WTC11 (cell line): ENCODE measurements at regions of chr11 and their contacts with region 1.

Region 1: DNA sequence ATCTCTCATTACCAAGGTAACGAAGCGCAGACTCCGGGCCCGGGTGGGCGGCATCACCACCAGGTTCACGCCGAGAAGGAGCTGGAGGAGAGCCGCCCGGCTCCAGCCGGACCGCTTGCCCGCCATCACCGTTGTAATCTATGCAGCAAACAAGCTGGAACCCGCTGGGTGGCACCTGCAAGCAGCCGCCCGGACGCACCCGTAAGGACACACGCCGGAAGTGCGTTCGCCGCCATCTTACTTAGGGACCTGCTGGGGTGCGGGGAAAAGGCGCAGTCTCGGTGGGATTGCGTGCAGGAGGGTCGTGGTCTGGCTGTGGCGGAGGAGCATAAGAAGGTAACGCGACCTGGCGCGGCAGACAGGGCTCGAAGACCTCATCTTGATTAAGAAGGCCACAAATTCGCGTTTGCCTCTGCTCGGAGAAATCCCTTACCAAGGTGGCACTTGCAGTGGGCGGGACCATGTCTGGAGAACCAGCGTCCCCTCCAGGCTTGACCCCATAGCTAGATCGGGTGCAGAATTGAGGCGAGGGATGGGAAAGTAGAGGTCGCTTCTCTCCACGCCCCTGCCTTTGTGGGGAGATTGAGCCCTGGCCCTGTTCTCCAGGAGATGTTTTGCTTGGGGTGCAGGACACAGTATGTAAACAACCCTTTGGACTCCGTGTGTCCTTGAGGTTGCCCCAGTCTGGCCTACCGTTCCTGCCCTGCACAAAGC is at the start of gene ACP2:
- DNase-seq: peak; percentile 91
- ATAC-seq: peak; percentile 93
- H3K4me3 Mint-ChIP-seq: peak within 1 kb of the TSS; percentile 98
- H3K27ac Mint-ChIP-seq: peak within 1 kb of the TSS; percentile 100
- H3K4me1 Mint-ChIP-seq: peaks cover 9% of the 10 kb centered on the region
- H3K27me3 Mint-ChIP-seq: no peaks in the 10 kb centered on the region
- CTCF ChIP-seq: no peak
- total RNA-seq, gene ACP2: 18.7 to 19.6 TPM (median 19.2 TPM) in 3 replicates

Region 2: GRCh38 chr11:47176328-47177228 is 72.2 kb before region 1 on chr11 and contains the start of gene ARFGAP2:
- CTCF ChIA-PET with region 1: interaction called, 23 read pairs
- POLR2A ChIA-PET with region 1: interaction called, 3 read pairs
- DNase-seq: peak; percentile 95
- ATAC-seq: peak; percentile 94
- H3K4me3 Mint-ChIP-seq: peak within 1 kb of the TSS; percentile 88
- H3K27ac Mint-ChIP-seq: peak within 1 kb of the TSS; percentile 98
- H3K4me1 Mint-ChIP-seq: peaks cover 16% of the 10 kb centered on the region
- H3K27me3 Mint-ChIP-seq: no peaks in the 10 kb centered on the region
- CTCF ChIP-seq: no peak
- total RNA-seq, gene ARFGAP2: 55.7 to 73.0 TPM (median 60.5 TPM) in 3 replicates

Region 3: DNA sequence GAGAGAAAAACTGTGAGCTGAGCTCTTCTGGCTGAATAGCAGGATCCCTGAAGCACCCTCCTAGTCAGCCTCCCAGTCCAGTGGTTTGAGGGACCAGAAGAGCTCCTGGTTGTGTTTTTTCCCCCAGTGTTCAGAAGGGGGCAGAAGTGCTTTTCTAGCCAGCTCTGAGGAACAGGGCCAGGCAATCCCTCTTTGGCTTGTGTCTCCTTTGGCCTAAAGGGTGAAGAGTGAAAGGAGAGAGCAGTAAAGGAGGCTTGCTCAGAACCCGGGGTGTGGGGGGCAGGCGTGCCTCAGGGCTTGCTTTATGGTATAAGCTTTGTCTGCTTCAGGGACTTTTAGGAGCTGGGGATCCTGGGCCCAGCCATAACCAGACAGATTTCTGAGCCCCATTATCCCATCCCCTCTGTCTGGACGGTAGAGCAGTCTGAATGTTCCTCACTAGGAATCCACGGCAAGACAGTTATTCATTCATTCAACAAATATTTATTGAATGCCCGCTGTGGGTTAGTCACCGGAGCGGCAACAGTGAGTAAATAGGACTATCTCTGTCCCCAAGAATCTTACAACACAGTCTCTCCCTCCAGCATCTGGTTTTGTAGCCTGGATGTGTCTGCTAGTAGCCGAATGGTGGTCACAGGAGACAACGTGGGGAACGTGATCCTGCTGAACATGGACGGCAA is 14.7 kb before region 1 on chr11:
- CTCF ChIA-PET with region 1: interaction called, 18 read pairs
- POLR2A ChIA-PET with region 1: interaction called, 12 read pairs
- DNase-seq: peak; percentile 22
- ATAC-seq: peak; percentile 86
- H3K4me3 Mint-ChIP-seq: no peak overlapping the region
- H3K27ac Mint-ChIP-seq: peak overlapping the region; percentile 75
- H3K4me1 Mint-ChIP-seq: peaks cover 3% of the 10 kb centered on the region; the same call in 1 of the 2 replicates
- H3K27me3 Mint-ChIP-seq: no peaks in the 10 kb centered on the region
- CTCF ChIP-seq: no peak